Gastrocnemius medialis (tissue), 4 donors: ENCODE measurements at regions of chr4 and their contacts with region 1.

Region 1: GRCh38 chr4:56435306-56435926 is at the start of gene PPAT:
- DNase-seq: peak; percentile 96
- ATAC-seq: peak; percentile 87 to 90
- H3K4me3 ChIP-seq: peak within 1 kb of the TSS; percentile 72 to 91 (median 87)
- H3K27ac ChIP-seq: peak within 1 kb of the TSS; percentile 91 to 99 (median 98)
- H3K4me1 ChIP-seq: peaks cover 16 to 18% of the 10 kb centered on the region in 2 donors
- H3K27me3 ChIP-seq: no peaks in the 10 kb centered on the region
- CTCF ChIP-seq: peak in 3 of 5 experiments; percentile 20 to 52 (median 40)
- POLR2A ChIP-seq: peak; percentile 64 to 67
- total RNA-seq, gene PPAT: 2.6 to 5.4 (median 3.9) TPM

Region 2: GRCh38 chr4:55948726-55949474 is 486.5 kb before region 1 on chr4 and contains the start of gene CEP135:
- in situ Hi-C with region 1: no loop called
- intact Hi-C with region 1: loop called (anchors 2 kb)
- DNase-seq: peak; percentile 79 to 87
- ATAC-seq: peak; percentile 92 to 94
- H3K4me3 ChIP-seq: peak within 1 kb of the TSS; percentile 64 to 88 (median 78)
- H3K27ac ChIP-seq: peak within 1 kb of the TSS; percentile 63 to 83 (median 78)
- H3K4me1 ChIP-seq: peaks cover 14 to 16% of the 10 kb centered on the region in 2 donors
- H3K27me3 ChIP-seq: no peaks in the 10 kb centered on the region
- CTCF ChIP-seq: peak; percentile 78 to 97 (median 89)
- POLR2A ChIP-seq: peak in 1 of 2 donors; percentile 37
- total RNA-seq, gene CEP135: 0.71 to 1.3 (median 1.1) TPM

Region 3: GRCh38 chr4:56387023-56388001 is 48.1 kb before region 1 on chr4 and contains the start of gene AASDH:
- in situ Hi-C with region 1: no loop called
- intact Hi-C with region 1: loop called (anchors 1 kb)
- DNase-seq: peak; percentile 78 to 86
- ATAC-seq: peak; percentile 96 to 97
- H3K4me3 ChIP-seq: peak within 1 kb of the TSS; percentile 72 to 98 (median 78)
- H3K27ac ChIP-seq: peak within 1 kb of the TSS; percentile 90 to 98 (median 92)
- H3K4me1 ChIP-seq: peaks cover 20 to 26% of the 10 kb centered on the region in 2 donors
- H3K27me3 ChIP-seq: no peaks in the 10 kb centered on the region
- CTCF ChIP-seq: peak in 1 of 5 experiments; percentile 32
- POLR2A ChIP-seq: peak; percentile 50 to 62
- total RNA-seq, gene AASDH: 2.6 to 4.2 (median 3.3) TPM

Region 4: GRCh38 chr4:56467284-56468096 is 32.1 kb after region 1 on chr4 and contains the start of gene SRP72:
- in situ Hi-C with region 1: no loop called
- intact Hi-C with region 1: loop called (anchors 1 kb)
- DNase-seq: peak; percentile 79 to 81
- ATAC-seq: peak; percentile 97
- H3K4me3 ChIP-seq: peak within 1 kb of the TSS; percentile 91 to 100 (median 100)
- H3K27ac ChIP-seq: peak within 1 kb of the TSS; percentile 93 to 97 (median 95)
- H3K4me1 ChIP-seq: peaks cover 38 to 41% of the 10 kb centered on the region in 2 donors
- H3K27me3 ChIP-seq: no peaks in the 10 kb centered on the region
- CTCF ChIP-seq: no peak
- POLR2A ChIP-seq: peak; percentile 35 to 62
- total RNA-seq, gene SRP72: 35.8 to 70.4 (median 53.1) TPM

Region 5: GRCh38 chr4:56828784-56829535 is 393.5 kb after region 1 on chr4:
- in situ Hi-C with region 1: loop called in 1 of 4 experiments (anchors 25 kb)
- intact Hi-C with region 1: no loop called
- DNase-seq: peak; percentile 48
- ATAC-seq: peak; percentile 47 to 67
- H3K4me3 ChIP-seq: no peak overlapping the region
- H3K27ac ChIP-seq: peak overlapping the region; percentile 28 to 78 (median 49)
- H3K4me1 ChIP-seq: peaks cover 11 to 33% of the 10 kb centered on the region in 2 donors
- H3K27me3 ChIP-seq: no peaks in the 10 kb centered on the region
- CTCF ChIP-seq: no peak
- POLR2A ChIP-seq: no peak

Region 6: DNA sequence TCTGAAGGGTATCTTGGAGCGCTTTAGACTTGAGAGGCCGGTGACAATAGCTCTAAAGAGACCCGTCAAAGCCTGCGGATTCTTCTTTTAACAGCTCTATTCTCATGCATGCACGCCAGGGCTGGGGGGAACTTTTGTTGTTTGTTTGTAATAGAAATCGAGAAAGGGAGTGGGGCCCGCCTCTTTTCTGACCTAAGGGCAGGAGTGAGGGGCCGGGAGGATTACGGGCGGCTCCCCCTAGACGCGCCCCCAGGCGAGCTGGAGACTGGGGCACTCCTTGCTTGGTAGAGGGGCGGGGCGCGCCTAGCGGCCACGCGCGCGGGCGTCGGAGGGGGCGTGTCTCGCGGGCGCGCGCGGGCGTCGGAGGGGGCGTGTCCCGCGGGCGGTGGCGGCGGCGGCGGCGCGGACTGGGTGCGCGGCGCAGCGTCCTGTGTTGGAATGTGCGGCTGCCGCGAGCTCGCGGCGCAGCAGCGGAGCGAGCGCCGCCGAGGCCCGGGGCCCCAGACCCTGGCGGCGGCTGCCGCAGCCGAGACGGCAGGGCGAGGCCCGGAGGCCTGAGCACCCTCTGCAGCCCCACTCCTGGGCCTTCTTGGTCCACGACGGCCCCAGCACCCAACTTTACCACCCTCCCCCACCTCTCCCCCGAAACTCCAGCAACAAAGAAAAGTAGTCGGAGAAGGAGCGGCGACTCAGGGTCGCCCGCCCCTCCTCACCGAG is 472.2 kb after region 1 on chr4 and contains the start of gene REST:
- in situ Hi-C with region 1: no loop called
- intact Hi-C with region 1: loop called (anchors 5 kb)
- DNase-seq: peak; percentile 41 to 61
- ATAC-seq: peak; percentile 77 to 78
- H3K4me3 ChIP-seq: peak within 1 kb of the TSS; percentile 61 to 98 (median 90)
- H3K27ac ChIP-seq: peak within 1 kb of the TSS; percentile 85 to 94 (median 89)
- H3K4me1 ChIP-seq: peaks cover 12 to 16% of the 10 kb centered on the region in 2 donors
- H3K27me3 ChIP-seq: no peaks in the 10 kb centered on the region
- CTCF ChIP-seq: no peak
- POLR2A ChIP-seq: peak; percentile 69 to 73
- total RNA-seq, gene REST: 17.9 to 22.6 (median 20.0) TPM

Region 7: GRCh38 chr4:56977321-56978012 is 542.1 kb after region 1 on chr4 and contains the start of gene NOA1:
- in situ Hi-C with region 1: no loop called
- intact Hi-C with region 1: loop called (anchors 2 kb)
- DNase-seq: peak; percentile 96 to 98
- ATAC-seq: peak; percentile 87 to 93
- H3K4me3 ChIP-seq: peak within 1 kb of the TSS; percentile 81 to 95 (median 90)
- H3K27ac ChIP-seq: peak within 1 kb of the TSS; percentile 81 to 94 (median 91)
- H3K4me1 ChIP-seq: peaks cover 41 to 53% of the 10 kb centered on the region in 2 donors
- H3K27me3 ChIP-seq: no peaks in the 10 kb centered on the region
- CTCF ChIP-seq: peak in 1 of 5 experiments; percentile 1
- POLR2A ChIP-seq: peak; percentile 67 to 73
- total RNA-seq, gene NOA1: 20.3 to 34.5 (median 23.2) TPM